ENCODE measurements at regions of chr14 and their contacts with region 1.

Region 1: GRCh38 chr14:102096214-102097114 is 9.6 kb upstream of the HSP90AA1 start:
- DNase-seq: peak; percentile 86

Region 2: DNA sequence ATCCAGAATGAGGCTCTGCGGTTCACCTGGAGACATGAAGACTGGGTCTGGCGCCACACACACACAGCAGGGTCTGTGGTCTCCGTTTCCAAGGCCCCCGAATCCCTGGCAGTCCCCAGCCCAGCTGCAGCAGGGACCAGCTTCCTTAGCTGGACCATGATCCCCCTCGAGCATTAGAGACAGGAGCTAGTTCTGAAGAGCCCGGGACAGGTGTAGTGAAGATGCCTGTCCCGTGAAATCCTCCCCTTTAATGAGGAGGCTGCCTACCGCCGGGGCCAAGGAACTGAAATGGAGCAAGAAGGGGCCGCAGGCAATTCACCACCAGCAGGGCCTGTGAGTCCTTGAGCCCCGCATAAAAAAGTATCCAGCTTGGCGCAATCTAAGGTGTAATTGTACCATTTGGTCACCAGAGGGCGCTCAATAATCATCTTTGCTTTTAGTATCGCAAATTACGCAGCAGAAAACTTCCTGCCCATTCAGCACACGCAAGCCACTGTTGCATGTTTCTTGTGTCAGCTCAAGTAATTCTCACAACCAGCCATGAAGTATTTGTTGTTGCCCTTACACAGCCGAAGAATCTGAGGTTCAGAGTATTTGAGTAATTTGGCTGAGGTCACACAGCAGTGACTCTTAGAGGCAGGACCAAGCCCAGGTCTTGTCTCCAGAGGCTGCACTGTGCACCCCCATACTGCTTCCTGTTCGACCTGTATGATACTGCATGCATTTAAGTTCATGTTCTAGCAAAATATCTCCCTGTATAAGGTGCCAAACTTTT is 389.2 kb before region 1 on chr14:
- intact Hi-C with region 1: loop called (anchors 1 kb)
- DNase-seq: no peak

Region 3: DNA sequence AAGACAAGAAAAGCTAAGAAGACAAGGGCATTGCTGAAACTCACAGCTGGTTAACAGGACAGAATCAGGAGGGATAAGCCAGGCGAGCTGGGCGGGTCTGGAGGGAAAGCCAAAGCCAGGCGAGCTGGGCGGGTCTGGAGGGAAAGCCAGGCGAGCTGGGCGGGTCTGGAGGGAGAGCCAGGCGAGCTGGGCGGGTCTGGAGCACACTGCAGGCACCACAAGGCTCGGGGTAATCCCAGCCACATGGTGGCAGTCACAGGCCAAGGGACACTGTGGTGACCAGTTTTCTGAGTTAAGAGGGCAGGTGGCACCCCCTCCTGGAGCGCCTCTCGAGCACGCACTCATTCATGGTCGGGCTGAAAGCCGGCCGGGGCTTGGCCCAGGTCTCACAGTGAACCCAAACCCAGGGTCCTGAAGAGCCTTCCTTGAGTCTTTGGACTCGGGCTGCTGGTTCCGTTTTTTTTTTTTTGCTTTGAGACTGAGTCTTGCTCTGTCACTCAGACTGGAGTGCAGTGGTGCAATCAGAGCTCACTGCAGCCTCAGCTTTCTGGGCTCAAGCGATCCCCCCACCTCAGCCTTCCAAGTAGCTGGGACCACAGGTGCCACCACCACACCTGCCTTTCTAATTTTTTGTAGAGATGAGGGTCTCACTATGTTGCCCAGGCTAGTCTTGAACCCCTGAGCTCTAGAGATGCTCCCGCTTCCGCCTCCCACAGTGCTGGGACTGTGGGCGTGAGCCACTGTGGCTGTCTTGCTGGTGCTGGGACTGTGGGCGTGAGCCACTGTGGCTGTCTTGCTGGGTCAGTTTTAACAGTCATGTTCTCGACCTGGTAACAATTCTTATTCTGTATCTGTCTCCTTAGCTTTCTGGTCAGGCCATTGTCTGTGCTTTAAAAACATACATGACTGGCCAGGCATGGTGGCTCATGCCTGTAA is 49.9 kb before region 1 on chr14:
- intact Hi-C with region 1: loop called (anchors 5 kb)
- DNase-seq: peak; percentile 88

Region 4: DNA sequence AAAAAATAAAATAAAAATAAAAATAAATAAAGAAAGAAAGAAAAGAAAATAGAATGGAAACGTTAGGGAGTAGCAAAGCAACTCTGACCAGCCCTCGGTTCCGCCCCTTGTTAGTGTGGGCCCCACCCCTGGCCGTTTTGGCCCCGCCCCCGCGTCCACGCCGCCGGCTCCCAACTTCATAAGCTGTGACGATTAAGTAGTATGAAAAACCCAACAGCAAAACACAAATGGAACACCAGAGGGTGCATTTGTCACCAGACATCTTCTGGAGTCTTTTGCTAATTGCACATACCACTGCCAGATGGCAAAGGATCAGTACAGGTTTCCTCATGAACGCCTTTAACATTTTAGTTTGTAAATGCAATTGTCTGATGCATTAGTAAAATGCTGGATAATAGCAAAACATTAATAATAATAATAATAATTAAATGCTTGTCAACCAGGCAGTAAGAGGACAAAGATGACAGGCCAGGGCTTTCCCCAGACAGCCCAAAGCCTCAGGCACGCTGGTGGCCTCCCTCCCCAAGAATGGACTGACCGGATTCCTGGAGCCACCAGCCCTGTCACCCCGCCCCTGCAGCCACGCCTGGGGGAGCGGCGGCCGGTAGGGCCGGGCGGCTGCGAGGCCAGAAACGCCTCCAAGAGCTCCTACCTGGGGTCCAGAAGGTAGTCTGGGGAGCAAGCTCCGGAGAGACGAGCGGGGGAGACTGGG is 33.2 kb before region 1 on chr14:
- intact Hi-C with region 1: loop called (anchors 5 kb)
- DNase-seq: peak; percentile 91

Region 5: GRCh38 chr14:102074690-102074964 is 21.8 kb before region 1 on chr14:
- intact Hi-C with region 1: no loop called
- DNase-seq: no peak

Region 6: GRCh38 chr14:102272392-102272791 is 175.9 kb after region 1 on chr14:
- intact Hi-C with region 1: no loop called
- DNase-seq: no peak

Region 7: DNA sequence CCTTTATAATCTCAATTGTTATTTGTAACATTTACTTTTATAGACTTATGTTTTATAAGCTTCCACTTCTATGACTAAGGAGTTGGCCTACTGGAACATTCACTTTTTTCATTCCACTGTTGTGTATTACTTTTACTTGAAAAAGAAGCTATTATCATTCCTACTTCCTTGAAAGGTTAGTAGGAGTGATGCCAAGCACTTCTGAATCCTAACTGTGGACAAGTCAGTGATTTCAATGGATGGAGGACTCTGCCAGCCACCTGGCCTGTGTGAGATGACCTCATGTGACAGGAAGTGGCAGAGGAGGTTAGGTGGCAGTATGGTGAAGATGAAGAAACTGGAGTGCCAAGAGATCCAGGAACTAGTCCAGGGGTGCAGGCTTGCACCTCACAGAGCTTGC is 312.3 kb after region 1 on chr14:
- intact Hi-C with region 1: no loop called
- DNase-seq: no peak

Measured in cardiac septum (tissue), 1 donor.